ENCODE measurements at regions of chr1 and their contacts with region 1.

Region 1: DNA sequence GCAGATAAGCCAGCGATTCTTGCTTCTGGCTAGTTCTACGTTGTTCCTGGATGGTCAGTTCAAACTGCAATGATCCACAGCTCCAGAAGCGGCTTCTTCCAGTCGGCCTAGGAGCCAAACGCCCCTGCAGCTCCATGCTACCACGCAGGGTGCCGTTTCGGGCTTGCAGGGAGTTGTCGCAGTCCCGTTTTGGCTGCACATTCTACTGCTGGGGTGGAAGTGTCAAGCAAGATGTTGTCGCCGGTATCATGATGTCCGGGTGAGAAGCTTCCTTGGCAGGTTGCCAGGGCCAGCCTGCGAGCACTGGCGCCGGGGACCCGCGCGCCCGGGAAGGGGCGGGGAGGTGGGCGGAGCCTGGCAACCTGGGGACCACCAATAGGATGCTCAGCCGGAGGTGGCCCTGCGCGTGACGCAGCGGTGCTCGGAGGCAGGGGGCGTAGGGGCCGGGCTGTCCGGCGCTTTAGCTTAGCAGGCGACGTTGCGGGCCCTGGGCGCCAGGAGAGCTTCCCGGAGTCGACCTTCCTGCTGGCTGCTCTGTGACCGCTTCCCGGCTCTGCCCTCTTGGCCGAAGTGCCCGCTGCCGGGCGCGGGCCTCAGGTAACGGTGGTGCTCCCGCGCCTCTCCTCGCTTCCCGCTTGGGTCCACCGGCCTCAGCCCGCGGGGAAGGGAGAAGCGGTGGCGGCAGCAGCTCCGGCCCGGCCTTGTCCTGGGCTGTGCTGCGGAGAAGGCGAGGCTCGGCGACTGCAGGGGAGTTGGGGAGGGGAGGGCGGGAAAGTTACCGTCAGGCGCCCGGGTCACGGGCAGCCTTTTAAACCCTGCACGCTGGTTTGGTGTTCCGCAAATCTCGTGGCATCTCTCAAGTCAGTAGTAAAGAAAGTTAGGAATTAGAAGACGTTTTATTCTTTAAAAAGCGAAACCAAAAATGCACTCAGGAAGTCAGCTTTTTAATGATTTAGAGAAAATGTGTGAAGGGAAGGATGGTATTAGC is at the start of gene SOAT1:
- DNase-seq: peak; percentile 81 to 99 (median 93)
- ATAC-seq: peak; percentile 91
- H3K4me3 ChIP-seq: peak within 1 kb of the TSS; percentile 80
- H3K4me3 Mint-ChIP-seq: peak within 1 kb of the TSS; percentile 93
- H3K27ac ChIP-seq: peak within 1 kb of the TSS; percentile 77 to 81
- H3K27ac Mint-ChIP-seq: peak within 1 kb of the TSS; percentile 85
- H3K4me1 ChIP-seq: peaks cover 38% of the 10 kb centered on the region
- H3K4me1 Mint-ChIP-seq: peaks cover 44% of the 10 kb centered on the region
- H3K27me3 ChIP-seq: no peaks in the 10 kb centered on the region
- H3K27me3 Mint-ChIP-seq: no peaks in the 10 kb centered on the region
- CTCF ChIP-seq: no peak
- total RNA-seq, gene SOAT1: 35.7 to 37.2 TPM

Region 2: GRCh38 chr1:178725603-178726517 is 567.8 kb before region 1 on chr1:
- CTCF ChIA-PET with region 1: no interaction called
- POLR2A ChIA-PET with region 1: interaction called, 3 read pairs
- intact Hi-C with region 1: loop called in 1 of 2 experiments (anchors 2 kb)
- DNase-seq: peak; percentile 23 to 85 (median 57)
- ATAC-seq: peak; percentile 84
- H3K4me3 ChIP-seq: peak overlapping the region; percentile 71
- H3K4me3 Mint-ChIP-seq: peak overlapping the region; percentile 93
- H3K27ac ChIP-seq: peak overlapping the region in 1 of 2 donors; percentile 29
- H3K27ac Mint-ChIP-seq: peak overlapping the region; percentile 87
- H3K4me1 ChIP-seq: peaks cover 9% of the 10 kb centered on the region
- H3K4me1 Mint-ChIP-seq: peaks cover 39% of the 10 kb centered on the region
- H3K27me3 ChIP-seq: no peaks in the 10 kb centered on the region
- H3K27me3 Mint-ChIP-seq: no peaks in the 10 kb centered on the region
- CTCF ChIP-seq: no peak

Region 3: DNA sequence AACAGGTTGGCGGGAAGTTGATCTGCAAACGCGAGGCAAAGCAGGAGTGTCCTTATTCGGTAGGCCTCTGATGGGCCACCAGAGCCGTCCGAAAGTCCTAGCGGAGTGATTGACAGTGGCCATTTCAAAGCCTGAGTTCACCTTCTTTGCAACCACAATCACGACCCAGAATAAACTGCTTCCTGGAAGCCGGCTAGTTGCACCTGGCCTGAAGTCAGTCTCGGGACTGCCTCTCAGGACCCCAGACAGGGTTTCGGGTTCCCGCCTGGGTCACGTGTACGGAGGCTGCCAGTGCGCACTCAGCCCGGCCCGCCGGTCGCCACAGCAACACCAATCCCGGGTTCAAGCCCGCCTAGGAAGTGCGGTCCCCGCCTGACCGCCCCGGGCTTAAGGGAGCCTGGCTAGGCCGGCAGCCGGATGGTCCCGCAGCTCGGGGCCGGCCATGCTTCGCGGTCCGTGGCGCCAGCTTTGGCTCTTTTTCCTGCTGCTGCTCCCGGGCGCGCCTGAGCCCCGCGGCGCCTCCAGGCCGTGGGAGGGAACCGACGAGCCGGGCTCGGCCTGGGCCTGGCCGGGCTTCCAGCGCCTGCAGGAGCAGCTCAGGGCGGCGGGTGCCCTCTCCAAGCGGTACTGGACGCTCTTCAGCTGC is 211.8 kb before region 1 on chr1 and contains the start of gene TOR3A:
- CTCF ChIA-PET with region 1: no interaction called
- POLR2A ChIA-PET with region 1: interaction called, 27 read pairs
- intact Hi-C with region 1: loop called (anchors 2 kb)
- DNase-seq: peak; percentile 54 to 86 (median 74)
- ATAC-seq: peak; percentile 32
- H3K4me3 ChIP-seq: peak within 1 kb of the TSS; percentile 82
- H3K4me3 Mint-ChIP-seq: peak within 1 kb of the TSS; percentile 99
- H3K27ac ChIP-seq: peak within 1 kb of the TSS; percentile 68 to 81
- H3K27ac Mint-ChIP-seq: peak within 1 kb of the TSS; percentile 92
- H3K4me1 ChIP-seq: peaks cover 32% of the 10 kb centered on the region
- H3K4me1 Mint-ChIP-seq: peaks cover 32% of the 10 kb centered on the region
- H3K27me3 ChIP-seq: no peaks in the 10 kb centered on the region
- H3K27me3 Mint-ChIP-seq: no peaks in the 10 kb centered on the region
- CTCF ChIP-seq: no peak
- total RNA-seq, gene TOR3A: 17.2 TPM

Region 4: GRCh38 chr1:179129702-179130473 is 163.7 kb before region 1 on chr1:
- CTCF ChIA-PET with region 1: interaction called, 3 read pairs
- POLR2A ChIA-PET with region 1: interaction called, 8 read pairs
- intact Hi-C with region 1: loop called in 1 of 2 experiments (anchors 2 kb)
- DNase-seq: peak in 8 of 14 experiments; percentile 12 to 89 (median 28)
- ATAC-seq: peak; percentile 95
- H3K4me3 ChIP-seq: peak overlapping the region; percentile 45
- H3K4me3 Mint-ChIP-seq: peak overlapping the region; percentile 76
- H3K27ac ChIP-seq: peak overlapping the region; percentile 60 to 78
- H3K27ac Mint-ChIP-seq: peak overlapping the region; percentile 86
- H3K4me1 ChIP-seq: peaks cover 14% of the 10 kb centered on the region
- H3K4me1 Mint-ChIP-seq: peaks cover 13% of the 10 kb centered on the region
- H3K27me3 ChIP-seq: no peaks in the 10 kb centered on the region
- H3K27me3 Mint-ChIP-seq: no peaks in the 10 kb centered on the region
- CTCF ChIP-seq: no peak

Region 5: GRCh38 chr1:179251675-179252074 is 42.0 kb before region 1 on chr1:
- CTCF ChIA-PET with region 1: no interaction called
- POLR2A ChIA-PET with region 1: interaction called, 4 read pairs
- intact Hi-C with region 1: loop called in 1 of 2 experiments (anchors 5 kb)
- DNase-seq: peak in 3 of 14 experiments; percentile 39 to 44 (median 40)
- ATAC-seq: no peak
- H3K4me3 ChIP-seq: no peak overlapping the region
- H3K4me3 Mint-ChIP-seq: no peak overlapping the region
- H3K27ac ChIP-seq: no peak overlapping the region
- H3K27ac Mint-ChIP-seq: no peak overlapping the region
- H3K4me1 ChIP-seq: no peaks in the 10 kb centered on the region
- H3K4me1 Mint-ChIP-seq: no peaks in the 10 kb centered on the region
- H3K27me3 ChIP-seq: no peaks in the 10 kb centered on the region
- H3K27me3 Mint-ChIP-seq: no peaks in the 10 kb centered on the region
- CTCF ChIP-seq: peak; percentile 56

Region 6: DNA sequence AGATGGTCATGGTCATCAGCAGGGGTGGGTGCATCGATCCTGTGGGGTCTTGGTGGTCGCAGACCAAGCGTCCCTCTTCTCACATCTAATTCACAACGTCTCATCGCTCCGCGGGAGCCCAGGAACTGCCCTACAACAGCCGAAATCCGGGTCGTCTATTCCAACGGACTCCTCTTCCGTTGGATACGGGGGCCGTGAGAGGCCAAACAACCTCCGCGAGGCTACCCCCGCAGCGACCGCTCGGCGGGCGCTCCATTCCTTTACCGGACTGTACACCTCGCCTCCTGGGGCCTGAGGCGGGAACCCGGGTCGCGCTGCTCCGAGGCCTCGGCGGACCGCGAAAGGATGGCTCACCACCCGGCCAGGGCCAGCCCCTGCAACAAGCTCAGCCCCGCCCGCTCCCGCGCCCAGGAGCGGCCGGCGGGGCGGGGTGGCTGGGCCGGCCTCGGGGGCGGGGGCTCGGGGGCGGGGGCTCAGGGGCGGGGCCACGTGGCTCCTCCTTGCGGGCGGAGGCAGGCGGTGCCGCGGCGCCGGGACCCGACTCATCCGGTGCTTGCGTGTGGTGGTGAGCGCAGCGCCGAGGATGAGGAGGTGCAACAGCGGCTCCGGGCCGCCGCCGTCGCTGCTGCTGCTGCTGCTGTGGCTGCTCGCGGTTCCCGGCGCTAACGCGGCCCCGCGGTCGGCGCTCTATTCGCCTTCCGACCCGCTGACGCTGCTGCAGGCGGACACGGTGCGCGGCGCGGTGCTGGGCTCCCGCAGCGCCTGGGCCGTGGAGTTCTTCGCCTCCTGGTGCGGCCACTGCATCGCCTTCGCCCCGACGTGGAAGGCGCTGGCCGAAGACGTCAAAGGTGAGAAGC is 860.9 kb after region 1 on chr1 and contains the start of gene QSOX1:
- CTCF ChIA-PET with region 1: no interaction called
- POLR2A ChIA-PET with region 1: no interaction called
- intact Hi-C with region 1: loop called in 1 of 2 experiments (anchors 10 kb)
- DNase-seq: peak; percentile 80 to 97 (median 86)
- ATAC-seq: peak; percentile 97
- H3K4me3 ChIP-seq: peak within 1 kb of the TSS; percentile 90
- H3K4me3 Mint-ChIP-seq: peak within 1 kb of the TSS; percentile 95
- H3K27ac ChIP-seq: peak within 1 kb of the TSS; percentile 19 to 42
- H3K27ac Mint-ChIP-seq: peak within 1 kb of the TSS; percentile 82
- H3K4me1 ChIP-seq: peaks cover 27% of the 10 kb centered on the region
- H3K4me1 Mint-ChIP-seq: peaks cover 33% of the 10 kb centered on the region
- H3K27me3 ChIP-seq: no peaks in the 10 kb centered on the region
- H3K27me3 Mint-ChIP-seq: no peaks in the 10 kb centered on the region
- CTCF ChIP-seq: no peak
- total RNA-seq, gene QSOX1: 13.7 to 14.3 TPM

Measured in CD4-positive, alpha-beta T cell (primary cell).